Activated B cell treated with CpG ODN at 0.5 μM for 24 hours (primary cell): ENCODE measurements at regions of chr16 and their contacts with region 1.

Region 1: DNA sequence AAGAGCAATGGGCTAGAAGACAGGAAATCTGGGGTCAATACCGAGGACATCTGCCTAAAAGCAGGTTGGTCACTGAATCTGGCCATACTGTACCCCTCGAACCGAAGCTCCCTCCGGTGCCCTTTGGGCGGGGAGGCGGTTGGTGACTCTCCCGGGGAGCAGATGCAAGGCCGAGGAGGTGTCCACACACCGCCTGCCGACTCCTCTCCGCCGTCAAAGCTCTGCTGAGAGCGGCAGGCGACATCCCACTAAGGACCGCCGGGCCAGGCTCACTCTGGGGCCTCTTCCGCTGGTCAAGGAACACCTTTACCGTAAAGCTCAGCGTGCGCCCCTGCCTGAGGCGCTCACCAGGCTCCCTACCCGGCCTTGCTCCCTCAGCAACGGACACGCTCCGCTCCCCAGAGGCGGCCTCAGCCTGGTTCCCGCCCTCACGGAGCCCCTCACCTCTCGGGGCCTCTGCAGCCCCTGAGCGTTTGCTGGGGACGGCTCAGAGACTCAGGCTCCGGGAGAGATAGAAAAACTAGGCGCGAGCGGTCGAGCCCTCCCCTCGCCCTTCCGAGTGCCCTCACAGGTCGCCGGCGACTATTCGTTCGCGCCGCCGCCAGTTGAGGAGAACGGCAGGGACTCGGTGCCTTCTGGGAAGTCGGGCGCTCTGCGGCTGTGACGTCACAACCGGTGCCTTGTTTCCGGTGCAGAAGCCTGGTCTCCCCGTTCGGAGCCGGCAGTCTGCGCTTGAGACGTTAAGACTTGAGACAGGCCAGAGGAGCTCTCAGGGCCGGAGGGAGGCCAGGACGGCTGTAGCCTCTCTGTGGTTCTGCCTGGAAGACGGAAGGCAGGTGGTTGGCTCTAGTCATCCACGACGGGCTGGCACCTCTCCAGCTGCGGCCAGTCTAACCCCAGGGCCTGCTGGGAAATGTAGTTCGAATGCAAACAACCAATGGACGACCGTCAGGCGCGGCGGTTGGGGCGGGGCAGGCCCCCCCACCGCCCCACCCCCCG is at the start of gene ZNF200:
- DNase-seq: peak; percentile 88
- ATAC-seq: peak; percentile 91
- H3K4me3 Mint-ChIP-seq: peak within 1 kb of the TSS; percentile 94
- H3K27ac Mint-ChIP-seq: peak within 1 kb of the TSS; percentile 96
- H3K4me1 Mint-ChIP-seq: peaks cover 24% of the 10 kb centered on the region
- H3K27me3 Mint-ChIP-seq: no peaks in the 10 kb centered on the region
- CTCF ChIP-seq: no peak
- total RNA-seq, gene ZNF200: 13.6 and 15.1 TPM in 2 replicates

Region 2: DNA sequence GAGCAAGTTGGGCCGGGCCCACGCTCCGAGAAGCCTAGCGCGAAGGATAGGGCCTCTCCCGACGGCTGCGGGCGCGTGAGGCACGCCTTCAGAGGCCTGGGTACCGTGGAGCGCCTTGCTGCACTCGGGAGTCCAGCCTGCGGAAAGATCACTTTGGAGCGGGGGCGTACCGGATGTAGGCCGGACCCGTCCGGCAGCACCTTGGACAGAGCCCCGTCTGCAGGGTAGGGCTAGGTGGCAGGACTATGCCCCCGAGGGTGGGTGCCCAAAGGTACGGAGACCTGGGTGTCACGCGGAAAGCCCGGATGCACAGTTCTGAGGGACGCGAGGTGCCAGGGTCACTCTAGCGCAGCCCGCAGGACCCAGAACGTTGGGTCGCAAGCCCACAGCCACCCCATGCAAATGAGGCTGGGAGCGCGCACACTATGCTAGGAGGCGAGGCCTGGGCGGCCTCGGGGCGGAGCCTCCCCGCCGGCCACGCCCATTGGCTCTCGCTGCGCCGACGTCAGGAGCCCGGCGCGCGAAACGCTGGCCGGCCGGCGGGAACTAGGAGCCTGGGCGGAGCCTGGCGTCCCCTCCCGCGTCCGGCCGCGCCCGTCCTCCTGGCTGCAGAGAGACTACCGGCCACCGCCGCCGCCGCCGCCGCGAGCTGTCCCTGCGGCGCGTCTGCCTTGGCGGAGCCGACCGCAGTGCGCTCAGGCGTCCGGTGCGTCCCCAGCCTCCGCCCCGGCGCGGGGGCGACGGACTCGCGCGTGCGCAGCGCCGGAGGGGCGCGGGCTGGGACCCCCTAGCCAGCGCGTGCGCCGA is 265.9 kb before region 1 on chr16 and contains the start of gene PAQR4:
- CTCF ChIA-PET with region 1: no interaction called
- POLR2A ChIA-PET with region 1: no interaction called
- intact Hi-C with region 1: no loop called
- DNase-seq: peak; percentile 86
- ATAC-seq: peak; percentile 80
- H3K4me3 Mint-ChIP-seq: peak within 1 kb of the TSS; percentile 77
- H3K27ac Mint-ChIP-seq: peak within 1 kb of the TSS; percentile 18
- H3K4me1 Mint-ChIP-seq: peaks cover 24% of the 10 kb centered on the region
- H3K27me3 Mint-ChIP-seq: peaks cover 12% of the 10 kb centered on the region
- CTCF ChIP-seq: no peak
- total RNA-seq, gene PAQR4: 2.4 and 2.7 TPM in 2 replicates

Region 3: GRCh38 chr16:3099732-3100499 is 134.9 kb before region 1 on chr16:
- CTCF ChIA-PET with region 1: no interaction called
- POLR2A ChIA-PET with region 1: no interaction called
- intact Hi-C with region 1: loop called (anchors 1 kb)
- DNase-seq: peak; percentile 76
- ATAC-seq: peak; percentile 85
- H3K4me3 Mint-ChIP-seq: peak overlapping the region; percentile 79
- H3K27ac Mint-ChIP-seq: peak overlapping the region; percentile 32
- H3K4me1 Mint-ChIP-seq: peaks cover 37% of the 10 kb centered on the region
- H3K27me3 Mint-ChIP-seq: no peaks in the 10 kb centered on the region
- CTCF ChIP-seq: no peak

Region 4: GRCh38 chr16:3158471-3159314 is 76.1 kb before region 1 on chr16:
- CTCF ChIA-PET with region 1: no interaction called
- POLR2A ChIA-PET with region 1: no interaction called
- intact Hi-C with region 1: loop called (anchors 5 kb)
- DNase-seq: peak; percentile 77
- ATAC-seq: peak; percentile 90
- H3K4me3 Mint-ChIP-seq: peak overlapping the region; percentile 91
- H3K27ac Mint-ChIP-seq: peak overlapping the region; percentile 90
- H3K4me1 Mint-ChIP-seq: peaks cover 23% of the 10 kb centered on the region
- H3K27me3 Mint-ChIP-seq: peaks cover 3% of the 10 kb centered on the region
- CTCF ChIP-seq: no peak

Region 5: GRCh38 chr16:3264137-3265036 is 29.5 kb after region 1 on chr16:
- CTCF ChIA-PET with region 1: no interaction called
- POLR2A ChIA-PET with region 1: interaction called, 7 read pairs
- intact Hi-C with region 1: loop called (anchors 1 kb)
- DNase-seq: peak; percentile 95
- ATAC-seq: peak; percentile 89
- H3K4me3 Mint-ChIP-seq: peak overlapping the region; percentile 89
- H3K27ac Mint-ChIP-seq: peak overlapping the region; percentile 95
- H3K4me1 Mint-ChIP-seq: peaks cover 27% of the 10 kb centered on the region
- H3K27me3 Mint-ChIP-seq: no peaks in the 10 kb centered on the region
- CTCF ChIP-seq: no peak

Region 6: GRCh38 chr16:3305109-3306068 is 70.5 kb after region 1 on chr16 and contains the starts of genes TIGD7 and ZNF75A:
- CTCF ChIA-PET with region 1: no interaction called
- POLR2A ChIA-PET with region 1: interaction called, 5 read pairs
- intact Hi-C with region 1: loop called (anchors 1 kb)
- DNase-seq: peak; percentile 83
- ATAC-seq: peak; percentile 91
- H3K4me3 Mint-ChIP-seq: peak within 1 kb of the TSS; percentile 88
- H3K27ac Mint-ChIP-seq: peak within 1 kb of the TSS; percentile 88
- H3K4me1 Mint-ChIP-seq: peaks cover 26% of the 10 kb centered on the region
- H3K27me3 Mint-ChIP-seq: no peaks in the 10 kb centered on the region
- CTCF ChIP-seq: no peak
- total RNA-seq, gene TIGD7: 6.7 and 11.0 TPM in 2 replicates
- total RNA-seq, gene ZNF75A: 84.0 and 97.9 TPM in 2 replicates

Region 7: DNA sequence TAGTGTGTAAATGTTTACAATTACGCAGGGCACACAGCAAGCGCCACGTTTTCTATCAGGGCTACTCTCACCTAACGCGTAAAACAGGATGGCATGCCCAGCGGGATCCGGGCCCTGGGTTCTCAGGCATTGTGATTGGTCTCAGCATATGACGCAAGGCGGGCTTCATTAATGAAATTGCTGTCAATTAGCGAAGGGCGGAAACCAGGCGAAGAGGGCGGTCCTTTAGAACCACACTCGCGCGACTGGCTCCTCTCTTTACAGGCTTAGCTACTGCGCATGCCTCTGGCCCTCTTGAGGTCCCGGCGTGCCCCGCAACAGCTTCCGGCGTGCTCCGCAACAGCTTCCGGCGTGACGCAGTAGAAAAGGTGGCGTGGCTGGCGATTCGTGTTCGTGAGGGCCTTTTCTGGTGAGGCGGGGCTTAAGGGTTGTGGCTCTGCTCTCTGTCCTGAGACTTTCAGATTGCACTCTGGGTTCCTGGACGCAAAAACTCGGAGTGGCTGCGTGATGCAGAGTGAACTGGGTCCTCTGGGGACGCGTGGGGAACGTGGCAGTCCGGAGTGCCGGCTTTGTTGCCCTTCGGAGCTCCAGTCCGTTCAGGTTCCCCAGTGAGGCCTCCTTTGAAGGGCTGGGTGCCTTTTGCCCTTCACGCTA is 130.1 kb after region 1 on chr16:
- CTCF ChIA-PET with region 1: no interaction called
- POLR2A ChIA-PET with region 1: no interaction called
- intact Hi-C with region 1: loop called (anchors 1 kb)
- DNase-seq: peak; percentile 65
- ATAC-seq: peak; percentile 95
- H3K4me3 Mint-ChIP-seq: peak overlapping the region; percentile 82
- H3K27ac Mint-ChIP-seq: peak overlapping the region; percentile 84
- H3K4me1 Mint-ChIP-seq: peaks cover 12% of the 10 kb centered on the region
- H3K27me3 Mint-ChIP-seq: peaks cover 9% of the 10 kb centered on the region
- CTCF ChIP-seq: no peak

Region 8: DNA sequence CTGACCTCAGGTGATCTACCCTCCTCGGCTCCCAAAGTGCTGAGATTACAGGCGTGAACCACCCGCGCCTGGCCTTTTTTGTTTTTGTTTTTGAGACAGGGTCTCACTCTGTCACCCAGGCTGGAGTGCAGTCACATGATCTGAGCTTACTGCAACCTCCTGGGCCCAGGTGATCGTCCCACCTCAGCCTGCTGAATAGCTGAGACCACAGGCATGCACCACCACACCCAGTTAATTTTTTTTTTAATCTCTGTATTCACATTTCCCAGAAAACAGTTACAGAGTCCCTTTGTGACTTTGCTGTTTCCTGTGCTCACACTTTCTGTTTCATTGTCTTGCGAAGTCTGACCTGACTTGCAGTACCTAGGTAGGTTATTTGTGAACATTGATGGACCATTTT is 268.7 kb after region 1 on chr16:
- CTCF ChIA-PET with region 1: no interaction called
- POLR2A ChIA-PET with region 1: no interaction called
- intact Hi-C with region 1: loop called (anchors 1 kb)
- DNase-seq: no peak
- ATAC-seq: no peak
- H3K4me3 Mint-ChIP-seq: peak overlapping the region; percentile 15
- H3K27ac Mint-ChIP-seq: no peak overlapping the region
- H3K4me1 Mint-ChIP-seq: peaks cover 29% of the 10 kb centered on the region
- H3K27me3 Mint-ChIP-seq: no peaks in the 10 kb centered on the region
- CTCF ChIP-seq: no peak